Activated B cell treated with CpG ODN at 0.5 μM for 24 hours (primary cell): ENCODE measurements at regions of chr19 and their contacts with region 1.

Region 1: DNA sequence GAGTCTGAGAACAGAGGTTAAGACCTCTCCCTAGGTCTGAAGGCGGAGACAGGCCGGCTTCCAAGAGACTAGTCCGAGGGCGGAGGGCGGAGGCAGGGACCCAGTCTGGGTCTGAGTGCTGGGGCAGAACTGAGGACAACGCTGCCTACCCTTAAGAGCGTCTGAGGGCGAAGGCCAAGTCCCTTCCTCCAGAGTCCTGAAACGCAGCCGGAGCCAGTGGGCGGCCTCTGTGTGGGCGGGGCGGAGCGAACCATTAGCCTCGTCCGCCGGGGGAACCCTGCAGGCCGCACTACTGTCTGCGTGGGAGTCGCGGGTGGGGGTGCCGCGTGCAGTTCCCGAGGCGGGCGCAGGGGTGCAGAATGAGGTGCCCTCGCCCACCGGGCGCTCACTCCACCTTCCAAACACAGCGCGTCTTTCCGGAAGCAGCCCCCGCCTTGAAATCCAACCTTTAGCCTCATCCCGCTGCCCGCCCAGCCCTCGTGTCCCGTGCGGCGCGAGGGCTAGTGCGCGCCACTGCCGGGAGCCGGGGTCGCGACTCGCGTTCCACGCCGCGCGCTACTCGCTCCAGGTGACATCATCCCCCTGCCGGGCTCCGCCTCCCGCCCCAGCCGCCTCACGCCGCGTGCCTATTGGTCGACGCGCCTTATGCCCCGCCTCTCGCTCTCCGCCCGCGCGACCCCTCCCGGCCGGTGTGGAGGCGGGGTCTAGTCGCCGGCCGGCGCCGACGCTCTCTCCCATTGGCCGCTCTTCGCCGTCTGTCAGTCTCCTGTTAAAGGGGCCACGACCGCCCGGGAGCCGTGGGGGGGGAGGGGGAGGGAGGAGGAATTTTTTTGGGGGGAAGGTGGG is at the start of gene C19orf73:
- DNase-seq: peak; percentile 96
- ATAC-seq: peak; percentile 82
- H3K4me3 Mint-ChIP-seq: peak within 1 kb of the TSS; percentile 84
- H3K27ac Mint-ChIP-seq: peak within 1 kb of the TSS; percentile 87
- H3K4me1 Mint-ChIP-seq: peaks cover 44% of the 10 kb centered on the region
- H3K27me3 Mint-ChIP-seq: peaks cover 7% of the 10 kb centered on the region
- CTCF ChIP-seq: no peak
- total RNA-seq, gene C19orf73: 0.98 and 1.0 TPM in 2 replicates

Region 2: GRCh38 chr19:49200238-49200862 is 81.6 kb after region 1 on chr19:
- CTCF ChIA-PET with region 1: interaction called, 5 read pairs
- POLR2A ChIA-PET with region 1: interaction called, 4 read pairs
- intact Hi-C with region 1: loop called (anchors 5 kb)
- DNase-seq: no peak
- ATAC-seq: no peak
- H3K4me3 Mint-ChIP-seq: no peak overlapping the region
- H3K27ac Mint-ChIP-seq: no peak overlapping the region
- H3K4me1 Mint-ChIP-seq: peaks cover 7% of the 10 kb centered on the region
- H3K27me3 Mint-ChIP-seq: peaks cover 2% of the 10 kb centered on the region
- CTCF ChIP-seq: no peak